Natural killer cell (primary cell): ENCODE measurements at regions of chr17 and their contacts with region 1.

Region 1: GRCh38 chr17:14813649-14814365 is 451.3 kb downstream of the PMP22 start:
- DNase-seq: peak in 1 of 2 donors; percentile 41
- ATAC-seq: no peak
- H3K4me3 ChIP-seq: no peak overlapping the region
- H3K4me3 Mint-ChIP-seq: no peak overlapping the region
- H3K27ac ChIP-seq: no peak overlapping the region
- H3K27ac Mint-ChIP-seq: no peak overlapping the region
- H3K4me1 ChIP-seq: no peaks in the 10 kb centered on the region
- H3K4me1 Mint-ChIP-seq: peaks cover 0 to 5% of the 10 kb centered on the region in 2 donors
- H3K27me3 ChIP-seq: no peaks in the 10 kb centered on the region
- H3K27me3 Mint-ChIP-seq: peaks cover 8 to 13% of the 10 kb centered on the region in 2 donors
- CTCF ChIP-seq: peak; percentile 23

Region 2: GRCh38 chr17:13594762-13595598 is 1218.8 kb before region 1 on chr17:
- intact Hi-C with region 1: loop called (anchors 1 kb)
- DNase-seq: peak; percentile 53 to 91
- ATAC-seq: peak; percentile 71 to 84 (median 76)
- H3K4me3 ChIP-seq: no peak overlapping the region
- H3K4me3 Mint-ChIP-seq: no peak overlapping the region
- H3K27ac ChIP-seq: no peak overlapping the region
- H3K27ac Mint-ChIP-seq: no peak overlapping the region
- H3K4me1 ChIP-seq: no peaks in the 10 kb centered on the region
- H3K4me1 Mint-ChIP-seq: peaks cover 5 to 6% of the 10 kb centered on the region in 2 donors
- H3K27me3 ChIP-seq: peaks cover 3% of the 10 kb centered on the region
- H3K27me3 Mint-ChIP-seq: peaks cover 41 to 42% of the 10 kb centered on the region in 2 donors
- CTCF ChIP-seq: peak; percentile 93